Right lobe of liver (tissue), 6 donors: ENCODE measurements at regions of chr7 and their contacts with region 1.

Region 1: DNA sequence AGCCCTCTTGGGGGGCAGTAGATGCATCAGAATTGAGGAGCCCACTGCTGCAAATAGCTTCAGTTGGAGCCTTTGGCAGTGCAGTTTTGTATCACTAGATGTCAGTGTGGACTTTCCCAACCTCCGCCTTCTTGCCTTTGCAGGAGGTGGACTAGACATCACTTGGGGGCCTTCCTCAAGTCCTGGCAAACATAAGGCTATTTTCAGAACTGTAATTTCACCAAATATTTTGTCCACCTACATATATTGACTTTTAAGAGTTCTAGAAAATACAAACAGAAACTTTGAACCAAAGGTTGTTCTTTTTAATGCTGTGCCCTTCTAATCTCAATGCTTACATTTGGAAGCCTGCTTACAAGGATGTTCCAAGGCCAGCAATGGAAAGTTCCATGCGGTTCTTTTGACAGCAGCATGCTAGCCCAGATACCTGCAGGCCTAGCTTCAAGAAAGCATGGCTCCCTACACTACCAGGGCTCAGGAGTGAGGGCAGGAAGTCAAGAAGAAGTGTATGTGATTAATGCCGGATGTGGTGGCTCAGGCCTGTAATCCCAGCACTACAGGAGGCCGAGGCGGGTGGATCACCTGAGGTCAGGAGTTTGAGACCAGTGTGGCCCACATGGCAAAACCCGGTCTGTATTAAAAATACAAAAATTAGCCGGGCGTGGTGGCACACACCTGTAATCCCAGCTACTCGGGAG is 8.0 kb upstream of the ZNRF2 start:
- DNase-seq: no peak
- ATAC-seq: peak; percentile 80 to 86 (median 83)
- H3K4me3 ChIP-seq: no peak overlapping the region
- H3K27ac ChIP-seq: no peak overlapping the region
- H3K4me1 ChIP-seq: peaks cover 0 to 32% (median 10%) of the 10 kb centered on the region in 4 donors
- H3K27me3 ChIP-seq: no peaks in the 10 kb centered on the region
- CTCF ChIP-seq: peak; percentile 52 to 75 (median 72)
- POLR2A ChIP-seq: no peak

Region 2: DNA sequence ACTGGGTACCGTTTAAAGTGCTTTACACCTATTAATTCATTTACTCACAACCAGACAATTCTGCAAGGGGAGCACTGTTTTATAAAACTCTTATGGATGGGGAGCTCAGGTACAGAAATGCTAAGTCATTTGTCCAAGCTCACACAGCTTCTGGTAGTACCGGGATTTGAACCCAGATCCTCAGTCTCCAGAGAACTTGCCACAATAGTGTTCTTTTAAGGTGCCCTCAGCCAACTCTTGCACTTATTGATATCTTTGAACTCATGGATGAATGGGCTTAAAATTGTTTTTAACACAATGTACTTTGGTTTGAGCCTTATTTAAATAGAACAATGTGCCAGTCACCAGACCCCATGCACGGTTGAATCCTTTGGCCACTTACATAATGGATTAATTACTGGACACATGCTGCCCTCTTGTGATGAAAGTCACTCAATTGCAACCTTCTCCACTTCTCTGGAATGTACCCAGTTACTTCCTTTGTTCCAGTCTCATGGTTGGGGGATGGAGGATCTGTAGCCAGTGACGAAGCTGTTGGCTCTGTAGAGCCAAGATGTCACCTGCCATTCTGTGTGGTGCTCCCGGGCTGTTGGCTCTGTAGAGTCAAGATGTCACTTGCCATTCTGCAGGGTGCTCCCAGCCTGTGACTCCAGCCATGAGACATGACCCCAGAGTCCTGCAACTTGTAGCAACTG is 136.6 kb after region 1 on chr7:
- intact Hi-C with region 1: loop called in 1 of 2 experiments (anchors 5 kb)
- DNase-seq: no peak
- ATAC-seq: peak; percentile 96 to 98 (median 97)
- H3K4me3 ChIP-seq: no peak overlapping the region
- H3K27ac ChIP-seq: peak overlapping the region in 1 of 3 donors; percentile 14
- H3K4me1 ChIP-seq: peaks cover 0 to 8% (median 0%) of the 10 kb centered on the region in 4 donors
- H3K27me3 ChIP-seq: no peaks in the 10 kb centered on the region
- CTCF ChIP-seq: peak; percentile 47 to 82 (median 60)
- POLR2A ChIP-seq: no peak